Ascending aorta (tissue), 2 donors: ENCODE measurements at regions of chr1 and their contacts with region 1.

Region 1: GRCh38 chr1:211613093-211613947 is 34.4 kb upstream of the SLC30A1 start:
- DNase-seq: peak; percentile 87 to 96
- H3K4me3 ChIP-seq: no peak overlapping the region
- H3K27ac ChIP-seq: peak overlapping the region; percentile 78 to 84
- H3K4me1 ChIP-seq: peaks cover 6 to 35% of the 10 kb centered on the region in 2 donors
- H3K27me3 ChIP-seq: no peaks in the 10 kb centered on the region
- CTCF ChIP-seq: no peak

Region 2: DNA sequence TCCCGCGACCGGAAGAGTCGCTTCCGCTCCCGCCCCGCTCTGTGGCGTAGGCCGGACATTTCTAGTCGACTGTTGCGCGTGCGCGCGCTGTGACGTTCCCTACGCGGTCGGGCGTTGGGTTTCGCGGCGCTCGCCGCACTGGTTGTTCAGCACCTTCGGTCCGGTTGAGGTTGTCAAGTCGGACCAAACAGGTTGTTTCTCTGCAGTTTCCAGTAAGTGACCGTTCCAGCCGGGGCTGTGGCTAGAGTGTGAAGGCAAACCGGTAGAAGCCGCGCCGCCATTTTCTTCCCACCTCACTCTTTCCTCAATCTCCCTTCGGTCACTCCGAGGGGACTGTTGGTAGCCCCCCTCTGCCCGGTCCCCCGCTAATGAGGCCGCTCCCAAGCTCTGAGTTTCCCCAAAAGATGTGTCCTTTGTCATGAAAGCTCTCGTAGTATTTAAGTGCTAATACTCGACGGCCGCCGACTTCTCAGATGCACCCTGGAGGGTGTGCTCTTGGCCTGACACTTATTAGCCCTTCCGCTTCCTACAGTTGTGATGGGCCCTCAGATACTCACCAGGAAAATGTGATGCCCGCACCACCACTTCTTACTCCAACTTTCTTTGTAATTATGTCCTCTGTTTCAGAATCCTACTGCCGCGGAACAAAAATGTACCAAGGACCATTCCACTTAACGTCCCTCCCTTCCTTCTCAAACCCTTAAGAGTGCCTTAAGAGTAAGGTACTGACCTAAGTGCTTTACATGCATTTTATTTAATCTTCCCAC is 230.4 kb before region 1 on chr1:
- intact Hi-C with region 1: no loop called
- DNase-seq: peak; percentile 59 to 96
- H3K4me3 ChIP-seq: peak overlapping the region; percentile 71 to 96
- H3K27ac ChIP-seq: peak overlapping the region; percentile 93 to 100
- H3K4me1 ChIP-seq: no peaks in the 10 kb centered on the region
- H3K27me3 ChIP-seq: no peaks in the 10 kb centered on the region
- CTCF ChIP-seq: peak in 1 of 3 experiments; percentile 3

Region 3: GRCh38 chr1:211589782-211590721 is 23.3 kb before region 1 on chr1:
- intact Hi-C with region 1: loop called (anchors 2 kb)
- DNase-seq: peak; percentile 60 to 88
- H3K4me3 ChIP-seq: no peak overlapping the region
- H3K27ac ChIP-seq: peak overlapping the region; percentile 58 to 68
- H3K4me1 ChIP-seq: peaks cover 5 to 13% of the 10 kb centered on the region in 2 donors
- H3K27me3 ChIP-seq: no peaks in the 10 kb centered on the region
- CTCF ChIP-seq: no peak

Region 4: DNA sequence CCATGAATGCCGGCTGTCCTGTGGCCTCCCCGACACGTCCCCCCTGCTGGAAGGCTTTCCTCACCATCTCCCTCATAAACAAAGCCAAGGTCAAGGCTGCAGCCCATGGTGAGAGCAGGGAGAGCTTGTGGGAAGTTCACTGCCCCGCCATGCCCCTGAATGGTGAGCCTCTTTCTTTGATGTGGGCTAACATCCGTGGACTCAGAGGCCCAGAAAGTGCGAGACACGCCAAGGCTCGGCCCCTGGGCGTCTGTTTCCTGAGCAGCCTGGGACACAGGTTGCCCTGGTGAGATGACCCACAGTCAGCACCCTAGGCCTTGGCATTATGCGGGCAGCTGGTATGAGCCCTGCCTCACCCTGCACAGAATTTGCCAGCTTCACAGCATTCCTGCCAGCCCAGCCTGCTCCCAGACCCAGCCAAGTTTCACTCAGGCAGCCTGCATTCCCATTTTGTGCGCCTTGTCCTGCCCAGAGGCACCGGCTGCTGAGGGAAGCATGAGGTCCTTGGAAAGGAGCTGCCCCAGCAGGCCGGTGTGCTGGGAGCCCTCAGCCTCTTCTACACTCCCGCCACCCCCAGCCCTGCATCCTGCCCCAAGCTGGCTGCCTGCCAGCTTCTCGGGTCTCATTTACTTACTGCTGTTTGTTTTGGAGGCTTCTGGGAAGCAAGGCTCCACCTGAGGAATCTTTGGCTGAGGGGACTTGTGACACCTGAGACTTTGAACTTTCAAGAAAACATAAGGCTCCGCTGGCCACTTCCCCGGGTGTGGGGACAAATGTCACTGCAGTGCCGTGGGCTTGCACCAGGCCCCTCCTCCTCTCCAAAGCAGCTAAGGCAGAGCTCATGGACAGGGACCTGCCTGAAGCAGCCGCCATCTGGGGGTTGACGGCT is 30.2 kb after region 1 on chr1:
- intact Hi-C with region 1: loop called (anchors 2 kb)
- DNase-seq: peak; percentile 54 to 90
- H3K4me3 ChIP-seq: peak overlapping the region in 1 of 2 donors; percentile 1
- H3K27ac ChIP-seq: peak overlapping the region; percentile 78
- H3K4me1 ChIP-seq: peaks cover 5 to 16% of the 10 kb centered on the region in 2 donors
- H3K27me3 ChIP-seq: no peaks in the 10 kb centered on the region
- CTCF ChIP-seq: no peak

Region 5: DNA sequence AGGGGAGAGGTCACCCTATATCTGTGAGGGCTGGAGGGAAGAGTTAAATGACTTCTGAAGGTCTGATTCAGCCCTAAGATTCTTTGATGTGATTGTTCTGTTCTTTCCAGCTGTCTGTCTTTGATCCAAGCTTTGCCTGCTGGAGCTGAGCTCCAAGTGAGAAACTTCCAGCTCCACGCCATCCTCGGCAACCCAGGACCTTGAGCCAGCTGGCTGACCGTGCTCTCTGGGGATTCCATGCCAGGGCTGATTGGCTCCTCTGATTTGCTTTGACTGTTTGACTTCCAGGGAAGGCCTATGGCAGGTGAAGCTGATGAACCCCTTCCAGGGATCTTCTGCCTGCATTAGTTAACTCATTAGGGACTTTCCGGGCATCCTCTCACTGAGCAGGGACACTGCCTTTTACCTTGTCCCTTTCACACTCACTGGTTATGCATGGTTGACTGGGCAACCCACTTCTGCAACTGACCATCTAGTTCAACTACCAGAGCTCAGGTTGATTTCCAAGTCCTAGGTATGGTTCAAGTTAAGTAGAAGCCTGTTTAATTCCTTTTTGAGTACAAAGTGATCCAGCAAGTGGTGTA is 1843.9 kb after region 1 on chr1:
- intact Hi-C with region 1: loop called (anchors 10 kb)
- DNase-seq: peak; percentile 34 to 85
- H3K4me3 ChIP-seq: peak overlapping the region; percentile 11 to 25
- H3K27ac ChIP-seq: peak overlapping the region; percentile 73 to 77
- H3K4me1 ChIP-seq: peaks cover 3 to 15% of the 10 kb centered on the region in 2 donors
- H3K27me3 ChIP-seq: no peaks in the 10 kb centered on the region
- CTCF ChIP-seq: no peak